A673 (cell line): ENCODE measurements at regions of chr3 and their contacts with region 1.

Region 1: GRCh38 chr3:71201939-71202338 is 381.6 kb downstream of the FOXP1 start:
- DNase-seq: peak; percentile 83
- H3K4me3 ChIP-seq: no peak overlapping the region
- H3K27ac ChIP-seq: peak overlapping the region; percentile 98
- H3K4me1 ChIP-seq: peaks cover 63% of the 10 kb centered on the region
- H3K27me3 ChIP-seq: no peaks in the 10 kb centered on the region
- CTCF ChIP-seq: no peak

Region 2: DNA sequence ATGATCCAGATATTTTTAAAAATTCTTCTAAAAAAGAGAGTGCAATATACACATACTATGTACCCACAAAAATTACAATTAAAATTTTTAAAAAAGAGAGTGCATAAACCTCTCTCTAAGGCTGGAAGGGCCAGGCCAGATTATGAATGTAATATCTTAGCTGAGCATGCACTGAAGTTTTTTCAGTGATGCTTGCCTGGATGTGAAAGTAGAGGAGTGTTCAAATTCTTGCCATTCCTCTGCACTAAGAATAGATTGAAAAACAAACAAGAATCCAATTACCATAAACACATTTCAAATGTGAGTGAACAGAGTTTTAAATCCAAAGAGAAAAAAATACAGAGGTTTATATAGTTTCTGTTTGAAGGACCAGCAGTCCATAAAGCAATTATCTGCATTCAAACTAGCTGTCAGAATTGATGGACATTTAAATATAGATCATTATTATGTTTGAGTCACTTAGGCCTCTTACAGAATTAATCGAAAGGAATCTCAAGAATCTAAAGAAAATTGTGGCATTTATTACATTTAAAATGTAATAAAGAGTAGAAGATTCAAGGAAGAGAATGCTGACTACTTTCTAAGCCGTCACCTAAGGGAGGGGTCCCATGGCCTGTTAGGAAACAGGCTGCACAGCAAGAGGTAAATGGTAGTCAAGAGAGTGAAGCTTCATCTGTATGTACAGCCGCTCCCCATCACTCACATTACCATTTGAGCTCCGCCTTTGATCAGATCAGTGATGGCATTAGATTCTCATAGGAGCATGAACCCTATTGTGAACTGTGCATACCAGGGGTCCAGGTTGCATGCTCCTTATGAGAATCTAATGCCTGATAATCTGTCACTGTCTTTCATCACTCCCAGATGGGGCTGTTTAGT is 730.2 kb before region 1 on chr3:
- CTCF ChIA-PET with region 1: no interaction called
- POLR2A ChIA-PET with region 1: interaction called, 28 read pairs
- intact Hi-C with region 1: no loop called
- DNase-seq: no peak
- H3K4me3 ChIP-seq: no peak overlapping the region
- H3K27ac ChIP-seq: no peak overlapping the region
- H3K4me1 ChIP-seq: no peaks in the 10 kb centered on the region
- H3K27me3 ChIP-seq: no peaks in the 10 kb centered on the region
- CTCF ChIP-seq: no peak

Region 3: DNA sequence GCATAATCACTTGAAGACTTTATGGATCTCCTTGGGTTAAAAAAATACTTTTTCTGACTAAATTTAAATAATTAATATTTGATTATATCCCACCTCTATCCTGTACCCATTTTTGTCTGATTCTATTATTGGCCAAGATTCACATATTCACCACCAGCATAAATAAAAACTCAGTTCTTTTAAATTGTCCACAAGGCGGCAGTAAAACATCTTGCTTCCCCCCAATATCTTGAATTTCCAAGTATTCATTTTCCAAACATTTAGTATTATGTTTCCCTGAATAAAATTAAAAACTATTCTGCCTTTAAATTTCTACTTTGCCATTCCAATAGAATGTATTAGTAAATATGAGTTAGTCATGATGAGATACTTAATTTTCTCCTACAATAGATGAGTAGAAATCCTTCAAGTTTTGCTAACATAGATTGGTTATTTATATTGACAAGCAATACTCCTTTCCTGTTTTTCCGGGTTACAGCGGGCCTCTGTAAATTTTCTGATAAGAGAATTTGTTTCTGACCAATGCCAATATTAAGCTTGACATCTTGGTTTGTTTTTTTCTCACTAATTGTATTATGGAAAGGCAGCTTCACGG is 670.8 kb before region 1 on chr3:
- CTCF ChIA-PET with region 1: no interaction called
- POLR2A ChIA-PET with region 1: no interaction called
- intact Hi-C with region 1: loop called (anchors 10 kb)
- DNase-seq: peak; percentile 21
- H3K4me3 ChIP-seq: no peak overlapping the region
- H3K27ac ChIP-seq: no peak overlapping the region
- H3K4me1 ChIP-seq: no peaks in the 10 kb centered on the region
- H3K27me3 ChIP-seq: no peaks in the 10 kb centered on the region
- CTCF ChIP-seq: peak; percentile 66

Region 4: DNA sequence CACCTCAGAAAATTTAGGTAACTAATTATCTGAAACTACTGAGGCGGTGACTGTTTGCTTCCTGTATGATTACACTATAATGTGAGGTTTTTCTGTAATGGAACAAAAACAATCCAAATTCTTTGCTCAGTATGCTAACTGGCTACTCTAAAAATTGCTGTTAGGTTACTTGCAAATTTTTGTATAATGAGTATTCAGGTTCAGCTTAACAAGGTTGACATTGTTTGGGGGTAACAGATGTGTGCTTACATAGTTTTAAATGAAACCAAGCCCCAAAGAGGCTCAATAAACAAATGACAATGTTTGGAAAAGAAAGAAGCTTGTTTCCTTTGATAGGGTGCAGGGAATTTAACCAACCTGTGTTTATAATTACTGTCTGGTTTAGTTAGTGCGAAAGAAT is 475.0 kb before region 1 on chr3:
- CTCF ChIA-PET with region 1: no interaction called
- POLR2A ChIA-PET with region 1: no interaction called
- intact Hi-C with region 1: no loop called
- DNase-seq: no peak
- H3K4me3 ChIP-seq: no peak overlapping the region
- H3K27ac ChIP-seq: no peak overlapping the region
- H3K4me1 ChIP-seq: no peaks in the 10 kb centered on the region
- H3K27me3 ChIP-seq: no peaks in the 10 kb centered on the region
- CTCF ChIP-seq: no peak

Region 5: GRCh38 chr3:71064288-71064955 is 137.5 kb before region 1 on chr3:
- CTCF ChIA-PET with region 1: no interaction called
- POLR2A ChIA-PET with region 1: no interaction called
- intact Hi-C with region 1: loop called (anchors 5 kb)
- DNase-seq: peak; percentile 51
- H3K4me3 ChIP-seq: peak overlapping the region; percentile 59
- H3K27ac ChIP-seq: peak overlapping the region; percentile 68
- H3K4me1 ChIP-seq: peaks cover 57% of the 10 kb centered on the region
- H3K27me3 ChIP-seq: no peaks in the 10 kb centered on the region
- CTCF ChIP-seq: no peak

Region 6: DNA sequence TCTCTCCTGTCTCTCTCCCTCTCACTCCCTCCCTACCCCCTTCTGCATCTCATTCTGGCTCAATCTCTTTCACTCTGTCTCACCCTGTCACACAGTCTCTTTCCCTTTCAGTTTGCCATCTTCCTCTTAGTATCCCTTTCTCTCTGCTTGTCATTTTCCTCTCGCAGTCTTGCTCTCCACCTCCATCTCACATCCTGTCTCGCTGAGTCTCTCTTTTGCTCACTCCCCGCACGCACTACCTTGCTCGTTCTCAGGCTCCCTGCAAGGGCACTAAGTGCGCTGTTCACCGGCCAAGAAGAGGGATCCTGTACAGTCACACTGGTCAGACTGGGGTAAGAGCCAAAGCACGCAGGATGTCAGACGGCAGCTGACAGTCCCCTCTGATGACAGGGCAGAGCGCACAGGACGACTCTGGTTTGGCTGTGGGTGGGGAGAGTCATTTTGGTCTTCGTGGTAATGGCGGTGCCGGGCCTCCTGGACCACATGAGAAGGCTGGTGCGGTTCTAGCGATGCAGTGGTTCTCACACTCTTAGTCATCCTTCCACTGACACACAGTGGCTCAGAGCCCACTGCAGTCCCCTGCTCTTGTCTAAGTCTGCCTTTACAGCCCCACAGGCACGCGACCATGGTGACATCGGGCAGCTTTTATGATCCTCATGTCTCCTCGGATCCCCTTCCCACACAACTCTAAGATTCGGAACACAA is 24.8 kb after region 1 on chr3:
- CTCF ChIA-PET with region 1: no interaction called
- POLR2A ChIA-PET with region 1: interaction called, 8 read pairs
- intact Hi-C with region 1: loop called (anchors 1 kb)
- DNase-seq: no peak
- H3K4me3 ChIP-seq: no peak overlapping the region
- H3K27ac ChIP-seq: peak overlapping the region; percentile 71
- H3K4me1 ChIP-seq: peaks cover 54% of the 10 kb centered on the region
- H3K27me3 ChIP-seq: no peaks in the 10 kb centered on the region
- CTCF ChIP-seq: no peak

Region 7: DNA sequence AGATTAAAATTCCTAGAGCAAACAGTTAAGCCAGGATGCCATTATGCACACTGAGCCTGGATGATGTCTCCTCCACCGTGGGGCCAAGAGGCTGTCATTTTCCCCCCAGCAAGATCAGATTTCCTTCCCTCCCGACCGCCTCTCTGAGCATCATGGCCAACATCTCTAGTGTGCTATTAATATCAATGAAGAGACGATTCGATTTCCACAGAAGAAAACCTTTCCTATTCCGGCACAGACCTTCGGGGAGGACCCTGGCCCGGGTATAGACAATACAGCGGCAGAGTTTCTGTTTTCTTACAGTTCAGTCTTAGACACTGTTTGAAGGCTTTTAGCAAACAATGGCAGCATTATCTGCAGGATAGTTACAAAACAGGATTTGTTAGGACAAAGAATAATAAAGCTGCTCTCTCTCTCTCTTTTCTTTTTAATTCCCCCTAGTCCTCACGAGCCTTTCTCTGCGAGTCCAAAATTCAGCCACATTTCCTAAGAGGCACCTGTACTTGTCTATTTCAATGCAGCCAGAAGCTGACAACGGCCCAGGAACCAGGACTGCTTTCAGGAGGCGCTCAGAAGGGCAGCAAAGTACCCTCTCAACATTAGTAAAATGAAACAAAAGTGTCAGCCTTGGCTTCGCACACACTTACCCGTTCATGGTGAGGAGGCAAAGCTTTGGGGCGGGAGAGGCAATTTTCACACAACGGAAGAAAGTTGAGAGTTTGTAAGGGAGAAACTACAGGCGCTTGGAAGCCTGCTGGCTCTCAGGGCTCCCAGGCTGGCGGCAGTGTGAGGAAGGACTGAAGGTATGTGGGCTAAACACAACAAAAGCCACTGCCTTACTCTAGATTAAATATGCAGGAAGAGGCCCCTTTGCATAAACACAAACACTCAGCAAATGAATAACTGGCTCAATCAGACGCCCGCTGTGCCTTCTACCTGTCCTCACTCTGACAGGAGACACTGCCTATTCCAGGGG is 103.6 kb after region 1 on chr3:
- CTCF ChIA-PET with region 1: no interaction called
- POLR2A ChIA-PET with region 1: no interaction called
- intact Hi-C with region 1: loop called (anchors 2 kb)
- DNase-seq: peak; percentile 37
- H3K4me3 ChIP-seq: peak overlapping the region; percentile 41
- H3K27ac ChIP-seq: peak overlapping the region; percentile 88
- H3K4me1 ChIP-seq: peaks cover 42% of the 10 kb centered on the region
- H3K27me3 ChIP-seq: no peaks in the 10 kb centered on the region
- CTCF ChIP-seq: no peak